Activated T-helper 2 cell treated with anti-CD3 and anti-CD28 coated beads, Interferon-gamma antibody, Interleukin-2, Interleukin-4, amounts not matched to agents 10 μg/mL and 5 μg/mL and 100 μg/mL, durations not matched to agents 14 hours and 24 hours and 36 hours (primary cell): ENCODE measurements at regions of chr13 and their contacts with region 1.

Region 1: DNA sequence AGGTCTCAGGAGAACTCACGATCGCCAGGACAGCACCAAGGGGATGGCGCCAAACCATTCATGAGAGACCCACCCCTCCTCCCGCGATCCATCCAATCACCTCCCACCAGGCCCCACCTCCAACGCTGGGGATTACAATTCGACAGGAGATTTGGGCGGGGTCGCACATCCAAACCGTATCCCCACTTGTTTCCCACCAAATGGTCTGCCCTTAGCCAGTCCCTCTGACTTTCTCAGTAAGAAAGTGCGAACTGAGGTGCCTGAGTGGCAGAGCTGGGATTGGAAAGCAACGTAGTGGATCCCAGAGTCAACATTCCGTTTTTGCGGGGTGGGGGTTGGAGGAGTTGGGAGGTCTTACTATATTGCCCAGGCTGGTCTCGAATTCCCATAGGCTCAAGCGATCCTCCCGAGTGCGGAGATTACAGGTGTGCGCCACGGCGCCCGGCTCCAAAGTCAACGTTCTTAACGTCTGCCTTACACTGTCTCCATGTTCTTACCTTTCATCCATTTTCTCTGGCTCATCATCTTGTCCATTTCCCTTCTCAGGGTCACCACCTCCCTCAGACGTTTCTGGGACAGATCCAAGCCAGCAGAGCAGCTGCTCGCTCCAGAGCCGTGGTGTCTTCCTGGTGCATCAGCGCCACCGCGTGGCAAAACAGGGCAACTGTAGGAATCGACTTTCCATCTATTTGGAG is 102.7 kb upstream of the ABCC4 start:
- DNase-seq: peak; percentile 56
- H3K4me3 Mint-ChIP-seq: peak overlapping the region; percentile 89
- H3K27ac Mint-ChIP-seq: no peak overlapping the region
- H3K4me1 Mint-ChIP-seq: peaks cover 6% of the 10 kb centered on the region
- H3K27me3 Mint-ChIP-seq: peaks cover 6% of the 10 kb centered on the region

Region 2: GRCh38 chr13:94660695-94661326 is 743.2 kb before region 1 on chr13:
- intact Hi-C with region 1: loop called (anchors 10 kb)
- DNase-seq: no peak
- H3K4me3 Mint-ChIP-seq: no peak overlapping the region
- H3K27ac Mint-ChIP-seq: no peak overlapping the region
- H3K4me1 Mint-ChIP-seq: peaks cover 37% of the 10 kb centered on the region
- H3K27me3 Mint-ChIP-seq: peaks cover 13% of the 10 kb centered on the region

Region 3: DNA sequence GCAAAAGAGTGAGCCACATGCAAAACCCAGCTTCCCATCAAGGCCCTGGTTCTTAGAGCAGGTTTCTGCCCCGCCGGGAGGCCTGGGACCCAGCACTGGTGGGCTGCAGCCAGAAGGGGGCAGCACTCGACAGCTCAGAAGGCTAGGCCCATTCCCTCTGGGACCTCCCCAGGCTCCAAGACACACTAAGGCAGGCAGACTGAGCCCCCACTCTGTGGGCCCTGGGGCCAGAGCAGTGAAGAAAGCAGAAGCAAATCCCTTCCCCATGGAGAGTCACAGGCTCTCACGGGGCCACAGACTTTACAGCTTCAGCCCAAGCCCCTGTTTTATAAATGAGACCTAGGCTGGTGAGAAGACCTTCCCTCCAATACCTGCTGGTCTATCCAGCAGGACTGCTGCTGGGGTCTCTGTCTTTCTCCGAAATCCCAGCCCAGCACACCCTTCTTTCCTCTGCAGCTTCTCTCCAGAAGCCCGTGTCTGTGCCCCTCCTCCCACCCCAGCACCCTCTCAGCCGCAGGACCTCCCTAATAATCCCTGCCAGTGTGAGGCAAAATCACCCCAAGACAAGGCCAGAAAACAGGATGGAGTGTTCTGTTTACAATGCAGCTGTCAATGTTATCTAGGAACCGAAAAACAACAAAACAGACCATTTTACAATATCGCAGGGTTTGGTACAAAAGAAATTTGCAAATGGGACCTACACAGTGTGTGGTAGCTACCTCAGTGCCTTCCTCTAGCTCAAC is 212.0 kb before region 1 on chr13:
- intact Hi-C with region 1: loop called (anchors 1 kb)
- DNase-seq: peak; percentile 34
- H3K4me3 Mint-ChIP-seq: no peak overlapping the region
- H3K27ac Mint-ChIP-seq: no peak overlapping the region
- H3K4me1 Mint-ChIP-seq: peaks cover 7% of the 10 kb centered on the region
- H3K27me3 Mint-ChIP-seq: no peaks in the 10 kb centered on the region

Region 4: DNA sequence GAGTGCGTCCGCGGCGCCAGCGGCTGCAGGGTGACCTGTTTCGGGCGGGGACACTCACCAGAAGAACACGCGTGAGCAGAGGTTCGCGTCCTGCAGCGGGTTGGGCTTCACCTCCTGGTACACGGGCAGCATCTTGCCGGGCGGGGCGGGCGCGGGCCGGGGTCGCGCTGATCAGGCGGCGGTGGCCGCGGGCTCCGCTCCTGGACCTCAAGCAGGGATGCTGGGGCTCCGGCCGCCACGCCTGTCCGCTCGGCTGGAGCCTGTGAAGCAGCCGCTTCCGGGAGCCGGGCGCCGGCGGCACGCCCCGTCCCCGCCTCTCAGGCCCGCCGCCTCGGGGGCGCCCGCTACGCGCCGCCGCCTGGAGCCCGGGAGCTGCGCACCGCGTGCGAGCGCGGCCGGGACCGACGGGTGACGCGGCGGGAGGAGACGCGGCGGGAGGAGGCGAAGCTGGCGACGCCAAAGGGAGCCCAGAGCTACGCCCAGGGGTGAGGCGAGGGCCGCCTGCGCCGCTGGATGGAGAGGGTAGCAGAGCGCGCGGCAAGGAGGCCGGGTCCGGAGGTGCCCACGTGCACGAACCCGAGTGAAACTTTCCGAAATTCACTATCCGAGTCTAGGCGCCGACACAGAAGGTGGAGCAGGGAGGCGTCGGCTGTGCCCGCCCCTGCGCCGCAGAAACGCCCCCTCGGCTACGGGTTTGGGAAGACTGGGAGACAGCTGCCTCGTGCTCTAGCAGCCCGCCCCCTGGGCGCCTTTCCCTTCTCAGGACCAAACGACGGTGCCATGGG is 102.6 kb before region 1 on chr13 and contains the start of gene ABCC4:
- intact Hi-C with region 1: loop called (anchors 2 kb)
- DNase-seq: peak; percentile 55
- H3K4me3 Mint-ChIP-seq: peak within 1 kb of the TSS; percentile 88
- H3K27ac Mint-ChIP-seq: peak within 1 kb of the TSS; percentile 76
- H3K4me1 Mint-ChIP-seq: peaks cover 27% of the 10 kb centered on the region
- H3K27me3 Mint-ChIP-seq: peaks cover 6% of the 10 kb centered on the region
- total RNA-seq, gene ABCC4: 19.3 and 19.6 TPM in 2 replicates

Region 5: DNA sequence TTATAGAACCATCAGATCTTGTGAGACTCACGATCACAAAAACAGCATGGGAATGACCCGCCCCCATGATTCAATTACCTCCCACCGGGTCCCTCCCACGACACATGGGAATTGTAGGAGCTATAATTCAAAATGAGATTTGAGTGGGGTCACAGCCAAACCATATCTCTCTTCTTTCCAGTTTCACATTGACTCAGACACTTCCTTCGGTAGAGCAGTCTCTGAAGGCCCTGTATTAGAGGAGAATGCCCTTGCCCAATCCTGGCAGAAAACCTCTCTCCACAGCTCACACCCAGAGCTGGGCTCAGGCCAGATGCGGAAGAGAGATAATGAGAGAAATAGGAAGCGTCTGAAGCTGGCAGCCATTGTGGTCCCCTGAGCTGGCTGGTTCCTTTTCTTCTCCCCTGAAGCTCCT is 76.2 kb after region 1 on chr13:
- intact Hi-C with region 1: loop called (anchors 2 kb)
- DNase-seq: no peak
- H3K4me3 Mint-ChIP-seq: no peak overlapping the region
- H3K27ac Mint-ChIP-seq: no peak overlapping the region
- H3K4me1 Mint-ChIP-seq: peaks cover 17% of the 10 kb centered on the region
- H3K27me3 Mint-ChIP-seq: peaks cover 6% of the 10 kb centered on the region

Region 6: DNA sequence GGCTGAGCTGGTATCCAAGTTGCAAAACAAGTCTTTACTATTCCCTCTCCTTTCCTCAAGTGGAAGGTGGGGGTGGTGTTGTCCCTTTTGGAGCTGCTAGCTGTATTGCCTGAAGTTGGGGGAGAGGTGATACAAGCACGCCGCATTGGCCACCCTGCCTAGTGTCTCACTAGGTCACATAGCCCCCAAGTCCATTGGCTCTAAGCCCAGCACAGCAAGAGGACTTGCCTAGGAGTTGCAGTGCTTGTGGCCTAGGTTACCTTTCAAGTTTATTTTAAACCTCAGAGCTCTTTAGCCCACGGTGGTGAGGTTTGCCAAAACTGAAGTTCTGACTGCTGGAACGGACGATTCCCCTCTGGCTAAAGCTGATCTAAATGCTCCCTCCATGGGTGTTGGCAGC is 267.6 kb after region 1 on chr13:
- intact Hi-C with region 1: no loop called
- DNase-seq: no peak
- H3K4me3 Mint-ChIP-seq: no peak overlapping the region
- H3K27ac Mint-ChIP-seq: no peak overlapping the region
- H3K4me1 Mint-ChIP-seq: peaks cover 24% of the 10 kb centered on the region
- H3K27me3 Mint-ChIP-seq: no peaks in the 10 kb centered on the region